Astrocyte of the cerebellum (primary cell): ENCODE measurements at regions of chr16 and their contacts with region 1.

Region 1: GRCh38 chr16:67441271-67441753 is 10.4 kb downstream of the HSD11B2 start:
- DNase-seq: no peak
- H3K4me3 ChIP-seq: no peak overlapping the region
- CTCF ChIP-seq: no peak

Region 2: DNA sequence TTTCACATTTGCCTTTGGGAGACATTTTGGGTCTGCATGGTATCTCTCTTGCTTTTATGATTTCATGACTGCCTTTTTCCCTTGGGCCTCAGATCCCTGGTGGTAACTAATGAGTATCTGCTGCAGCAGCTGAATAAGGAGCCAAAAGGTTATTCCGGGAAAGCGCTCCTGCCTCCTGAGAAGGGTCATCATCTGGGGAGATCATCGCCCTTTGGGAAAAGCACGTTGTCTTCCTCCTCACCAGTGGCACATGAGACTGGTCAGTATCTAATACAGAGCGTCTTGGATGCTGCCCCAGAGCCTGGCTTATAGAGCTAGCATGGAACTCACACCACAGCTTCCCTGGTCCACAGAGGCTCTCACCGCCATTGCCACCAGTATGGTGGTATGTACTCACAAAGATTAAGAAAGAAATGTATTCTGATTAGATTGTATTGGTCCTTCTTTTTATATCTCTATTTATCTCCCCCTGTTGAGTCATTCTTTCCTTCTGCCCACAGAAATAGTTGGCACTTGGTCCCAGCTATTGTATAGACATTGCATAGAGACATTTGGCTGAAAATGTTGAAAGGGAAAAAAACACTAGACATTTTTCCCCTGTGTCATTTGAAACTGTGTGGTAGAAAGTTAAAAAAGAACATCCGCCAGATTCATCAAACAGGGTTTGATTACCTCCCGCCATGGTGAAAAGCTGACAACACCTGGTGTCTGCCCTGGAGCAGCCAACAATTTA is 56.4 kb before region 1 on chr16:
- in situ Hi-C with region 1: loop called (anchors 5 kb)
- DNase-seq: no peak
- H3K4me3 ChIP-seq: no peak overlapping the region
- CTCF ChIP-seq: no peak

Region 3: GRCh38 chr16:67399181-67399733 is 42.1 kb before region 1 on chr16:
- in situ Hi-C with region 1: no loop called
- DNase-seq: no peak
- H3K4me3 ChIP-seq: no peak overlapping the region
- CTCF ChIP-seq: peak; percentile 84